GM18951 (cell line): ENCODE measurements at regions of chr15 and their contacts with region 1.

Region 1: DNA sequence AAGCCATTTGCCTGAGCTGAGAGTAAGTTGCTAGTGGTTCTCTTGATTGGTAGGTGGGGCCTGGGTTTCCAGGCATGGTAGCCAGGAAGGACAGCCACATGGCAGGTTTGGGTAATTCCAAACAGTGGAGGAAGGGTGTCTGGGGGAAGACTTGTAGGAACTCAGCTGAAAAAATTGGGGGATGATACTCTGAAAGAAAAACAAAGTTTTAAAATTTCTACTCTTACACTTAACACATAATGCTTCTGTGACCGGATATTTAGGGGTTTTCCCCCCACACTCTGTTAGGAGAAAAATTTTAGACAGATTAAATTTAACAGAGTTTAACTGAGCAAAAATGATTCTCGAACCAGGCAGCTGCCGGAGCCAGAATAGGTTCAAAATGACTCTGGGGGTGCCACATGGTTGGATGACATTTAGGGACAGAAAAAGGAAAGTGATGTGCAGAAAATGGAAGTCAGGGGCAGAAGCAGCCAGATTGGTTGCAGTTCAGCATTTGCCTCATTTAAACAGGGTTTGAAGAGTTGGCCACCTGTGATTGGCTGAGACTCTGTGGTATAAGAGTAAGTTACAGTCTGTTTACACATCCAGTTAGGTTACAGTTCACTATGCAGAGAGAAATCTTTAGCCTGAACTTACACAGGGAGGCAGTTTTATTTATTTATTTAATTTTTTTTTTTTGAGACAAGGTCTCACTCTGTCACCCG is 8.1 kb downstream of the B2M start:
- POLR2A ChIP-seq: peak; percentile 70

Region 2: GRCh38 chr15:44666210-44667038 is 53.0 kb before region 1 on chr15:
- in situ Hi-C with region 1: loop called (anchors 5 kb)
- POLR2A ChIP-seq: peak; percentile 35

Region 3: GRCh38 chr15:44882499-44882968 is 163.1 kb after region 1 on chr15:
- in situ Hi-C with region 1: no loop called
- POLR2A ChIP-seq: peak; percentile 55